CD4-positive, alpha-beta T cell (primary cell): ENCODE measurements at regions of chr14 and their contacts with region 1.

Region 1: GRCh38 chr14:67619446-67620216 is at the start of gene ARG2:
- DNase-seq: peak; percentile 92 to 99 (median 97)
- ATAC-seq: peak; percentile 90
- H3K4me3 ChIP-seq: peak within 1 kb of the TSS; percentile 88
- H3K4me3 Mint-ChIP-seq: peak within 1 kb of the TSS; percentile 94
- H3K27ac ChIP-seq: peak within 1 kb of the TSS; percentile 83 to 86
- H3K27ac Mint-ChIP-seq: peak within 1 kb of the TSS; percentile 83
- H3K4me1 ChIP-seq: peaks cover 21% of the 10 kb centered on the region
- H3K4me1 Mint-ChIP-seq: peaks cover 44% of the 10 kb centered on the region
- H3K27me3 ChIP-seq: peaks cover 0 to 4% of the 10 kb centered on the region in 2 experiments
- H3K27me3 Mint-ChIP-seq: no peaks in the 10 kb centered on the region
- CTCF ChIP-seq: no peak
- total RNA-seq, gene ARG2: 3.7 to 3.9 TPM

Region 2: GRCh38 chr14:67575684-67576083 is 43.9 kb before region 1 on chr14:
- CTCF ChIA-PET with region 1: no interaction called
- POLR2A ChIA-PET with region 1: no interaction called
- intact Hi-C with region 1: no loop called
- DNase-seq: peak in 1 of 14 experiments; percentile 12
- ATAC-seq: no peak
- H3K4me3 ChIP-seq: no peak overlapping the region
- H3K4me3 Mint-ChIP-seq: no peak overlapping the region
- H3K27ac ChIP-seq: no peak overlapping the region
- H3K27ac Mint-ChIP-seq: no peak overlapping the region
- H3K4me1 ChIP-seq: peaks cover 3% of the 10 kb centered on the region
- H3K4me1 Mint-ChIP-seq: no peaks in the 10 kb centered on the region
- H3K27me3 ChIP-seq: no peaks in the 10 kb centered on the region
- H3K27me3 Mint-ChIP-seq: no peaks in the 10 kb centered on the region
- CTCF ChIP-seq: no peak

Region 3: GRCh38 chr14:67586369-67586768 is 33.3 kb before region 1 on chr14:
- CTCF ChIA-PET with region 1: no interaction called
- POLR2A ChIA-PET with region 1: no interaction called
- intact Hi-C with region 1: no loop called
- DNase-seq: no peak
- ATAC-seq: no peak
- H3K4me3 ChIP-seq: no peak overlapping the region
- H3K4me3 Mint-ChIP-seq: no peak overlapping the region
- H3K27ac ChIP-seq: no peak overlapping the region
- H3K27ac Mint-ChIP-seq: no peak overlapping the region
- H3K4me1 ChIP-seq: no peaks in the 10 kb centered on the region
- H3K4me1 Mint-ChIP-seq: no peaks in the 10 kb centered on the region
- H3K27me3 ChIP-seq: no peaks in the 10 kb centered on the region
- H3K27me3 Mint-ChIP-seq: no peaks in the 10 kb centered on the region
- CTCF ChIP-seq: no peak

Region 4: GRCh38 chr14:67766172-67766680 is 146.6 kb after region 1 on chr14:
- CTCF ChIA-PET with region 1: no interaction called
- POLR2A ChIA-PET with region 1: no interaction called
- intact Hi-C with region 1: no loop called
- DNase-seq: peak in 3 of 14 experiments; percentile 13 to 14 (median 13)
- ATAC-seq: no peak
- H3K4me3 ChIP-seq: no peak overlapping the region
- H3K4me3 Mint-ChIP-seq: no peak overlapping the region
- H3K27ac ChIP-seq: no peak overlapping the region
- H3K27ac Mint-ChIP-seq: no peak overlapping the region
- H3K4me1 ChIP-seq: no peaks in the 10 kb centered on the region
- H3K4me1 Mint-ChIP-seq: no peaks in the 10 kb centered on the region
- H3K27me3 ChIP-seq: no peaks in the 10 kb centered on the region
- H3K27me3 Mint-ChIP-seq: no peaks in the 10 kb centered on the region
- CTCF ChIP-seq: no peak

Region 5: DNA sequence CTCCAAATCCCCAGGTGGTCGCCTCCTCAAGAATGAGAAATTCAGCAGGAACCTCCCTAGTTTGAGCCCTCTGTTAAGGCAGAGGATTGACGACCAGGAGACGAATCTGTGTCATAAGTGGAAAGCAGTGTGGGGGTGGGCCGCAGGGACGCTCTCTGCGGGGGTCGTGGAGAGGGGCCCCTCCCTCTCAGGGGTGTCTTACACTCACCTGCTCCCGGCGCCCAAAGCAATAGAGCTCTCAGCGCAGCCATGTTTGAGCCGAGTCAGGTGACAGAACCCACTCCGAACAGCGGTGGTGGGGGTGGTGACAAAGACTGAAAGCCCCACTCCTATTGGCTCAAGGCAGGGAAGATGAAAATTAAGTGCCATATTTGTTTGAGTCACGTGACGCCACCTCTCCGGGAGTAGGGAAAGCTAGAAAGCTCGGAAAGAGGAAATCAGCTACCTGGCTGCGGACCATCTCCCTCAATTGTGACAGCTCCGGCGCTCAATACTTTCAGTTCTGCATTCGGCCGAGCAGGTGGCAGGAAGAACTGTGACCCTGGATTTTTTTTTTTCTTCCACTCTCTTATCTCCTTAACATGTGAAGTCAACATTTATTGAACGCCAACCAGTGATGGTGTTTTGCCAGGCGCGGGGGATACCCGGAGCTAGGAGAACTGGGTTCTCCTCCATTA is 196.8 kb after region 1 on chr14 and contains the start of gene ZFYVE26:
- CTCF ChIA-PET with region 1: no interaction called
- POLR2A ChIA-PET with region 1: no interaction called
- intact Hi-C with region 1: loop called in 1 of 2 experiments (anchors 5 kb)
- DNase-seq: peak; percentile 77 to 95 (median 82)
- ATAC-seq: peak; percentile 94
- H3K4me3 ChIP-seq: peak within 1 kb of the TSS; percentile 78
- H3K4me3 Mint-ChIP-seq: peak within 1 kb of the TSS; percentile 94
- H3K27ac ChIP-seq: peak within 1 kb of the TSS; percentile 67 to 74
- H3K27ac Mint-ChIP-seq: peak within 1 kb of the TSS; percentile 85
- H3K4me1 ChIP-seq: peaks cover 38% of the 10 kb centered on the region
- H3K4me1 Mint-ChIP-seq: peaks cover 68% of the 10 kb centered on the region
- H3K27me3 ChIP-seq: no peaks in the 10 kb centered on the region
- H3K27me3 Mint-ChIP-seq: no peaks in the 10 kb centered on the region
- CTCF ChIP-seq: no peak
- total RNA-seq, gene ZFYVE26: 20.5 to 23.2 TPM